PC-9 (cell line): ENCODE measurements at regions of chr21 and their contacts with region 1.

Region 1: GRCh38 chr21:31659536-31660258 is at the start of gene SOD1:
- DNase-seq: peak; percentile 72 to 90
- H3K4me3 ChIP-seq: peak within 1 kb of the TSS; percentile 82
- H3K27ac ChIP-seq: peak within 1 kb of the TSS; percentile 66
- H3K4me1 ChIP-seq: peaks cover 31% of the 10 kb centered on the region
- H3K27me3 ChIP-seq: no peaks in the 10 kb centered on the region
- CTCF ChIP-seq: no peak
- total RNA-seq, gene SOD1: 275 and 288 TPM in 2 replicates

Region 2: DNA sequence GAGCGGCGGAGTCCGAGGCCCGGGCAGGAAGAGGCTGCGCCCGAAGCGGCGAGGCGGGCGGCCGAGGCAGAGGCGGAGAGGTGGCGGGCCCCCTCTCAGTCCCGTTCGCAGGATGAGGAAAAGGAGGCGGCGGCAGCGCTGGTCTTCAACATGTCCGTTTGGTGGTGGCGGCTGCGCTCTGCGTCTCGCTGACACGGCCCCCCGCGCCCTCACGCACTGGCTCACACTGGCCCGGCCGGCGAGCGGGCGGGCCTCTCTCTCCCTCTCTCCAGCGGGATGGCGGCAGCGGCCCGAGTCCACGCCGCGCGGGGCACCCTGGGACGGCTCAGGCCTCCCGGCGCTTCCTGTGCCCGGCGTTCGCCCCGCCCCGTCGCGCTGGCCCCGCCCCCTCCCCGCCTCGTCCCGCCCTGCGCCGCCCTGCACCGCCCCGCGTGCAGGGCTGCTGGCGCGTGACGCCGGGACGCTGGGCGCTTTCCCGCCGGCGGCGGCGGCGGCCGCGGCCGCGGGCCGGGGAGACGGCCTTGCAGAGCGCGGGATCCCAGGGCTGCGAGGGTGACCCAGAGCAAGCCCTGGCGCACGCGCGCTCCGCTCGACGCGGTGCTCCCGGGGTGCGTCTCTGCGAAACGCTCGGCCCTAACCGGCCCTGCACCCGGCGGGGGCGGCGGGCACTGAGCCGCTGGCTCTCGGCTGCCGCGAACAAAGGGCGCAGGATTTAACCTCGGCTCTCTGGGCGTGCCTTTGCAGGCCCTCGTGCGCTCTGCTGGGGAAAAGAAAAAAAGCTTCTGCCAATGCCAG is 72.3 kb after region 1 on chr21 and contains the start of gene SCAF4:
- CTCF ChIA-PET with region 1: no interaction called
- POLR2A ChIA-PET with region 1: no interaction called
- intact Hi-C with region 1: loop called (anchors 5 kb)
- DNase-seq: peak; percentile 64 to 86
- H3K4me3 ChIP-seq: peak within 1 kb of the TSS; percentile 82
- H3K27ac ChIP-seq: peak within 1 kb of the TSS; percentile 53
- H3K4me1 ChIP-seq: peaks cover 21% of the 10 kb centered on the region
- H3K27me3 ChIP-seq: no peaks in the 10 kb centered on the region
- CTCF ChIP-seq: no peak
- total RNA-seq, gene SCAF4: 22.4 and 30.0 TPM in 2 replicates

Region 3: GRCh38 chr21:31927689-31928353 is 268.1 kb after region 1 on chr21:
- CTCF ChIA-PET with region 1: no interaction called
- POLR2A ChIA-PET with region 1: no interaction called
- intact Hi-C with region 1: no loop called
- DNase-seq: no peak
- H3K4me3 ChIP-seq: no peak overlapping the region
- H3K27ac ChIP-seq: no peak overlapping the region
- H3K4me1 ChIP-seq: no peaks in the 10 kb centered on the region
- H3K27me3 ChIP-seq: peaks cover 35% of the 10 kb centered on the region
- CTCF ChIP-seq: no peak